ENCODE measurements at regions of chr17 and their contacts with region 1.

Region 1: DNA sequence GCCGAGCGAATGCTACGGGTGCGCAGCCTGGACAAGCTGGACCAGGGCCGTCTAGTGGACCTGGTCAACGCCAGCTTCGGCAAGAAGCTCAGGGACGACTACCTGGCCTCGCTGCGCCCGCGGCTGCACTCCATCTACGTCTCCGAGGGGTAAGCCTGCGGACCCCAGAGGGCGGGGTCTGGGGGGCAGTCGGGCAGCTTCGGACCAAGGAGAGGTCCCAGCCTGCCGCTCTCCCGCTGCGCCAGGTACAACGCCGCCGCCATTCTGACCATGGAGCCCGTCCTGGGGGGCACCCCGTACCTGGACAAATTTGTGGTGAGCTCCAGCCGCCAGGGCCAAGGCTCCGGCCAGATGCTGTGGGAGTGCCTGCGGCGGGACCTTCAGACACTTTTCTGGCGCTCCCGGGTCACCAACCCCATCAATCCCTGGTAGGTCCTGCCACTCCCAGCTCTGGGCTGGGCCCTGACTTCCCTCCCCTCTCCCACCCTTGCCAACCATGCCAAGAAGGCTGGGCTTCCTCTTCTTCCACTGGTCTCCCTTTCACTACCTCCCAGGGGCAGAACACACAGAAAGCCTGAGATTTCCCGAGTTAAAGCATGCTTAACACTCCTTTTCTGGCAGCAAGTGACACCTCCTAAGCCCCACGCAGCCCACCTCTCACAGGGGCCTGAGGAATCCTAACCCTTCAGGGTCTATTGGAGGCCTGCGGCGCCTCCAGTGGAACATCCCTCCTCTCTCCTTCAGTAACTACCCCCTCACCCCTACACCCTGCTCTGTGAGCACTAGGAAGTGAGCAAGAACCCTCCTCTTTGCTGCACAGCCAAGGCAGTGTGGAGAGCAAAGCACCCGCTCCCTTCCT is 3.2 kb downstream of the NAGS start:
- DNase-seq: peak; percentile 43
- H3K4me3 Mint-ChIP-seq: peak overlapping the region; percentile 79
- H3K27ac Mint-ChIP-seq: peak overlapping the region; percentile 78
- H3K4me1 Mint-ChIP-seq: peaks cover 40% of the 10 kb centered on the region
- H3K27me3 Mint-ChIP-seq: peaks cover 53% of the 10 kb centered on the region

Region 2: DNA sequence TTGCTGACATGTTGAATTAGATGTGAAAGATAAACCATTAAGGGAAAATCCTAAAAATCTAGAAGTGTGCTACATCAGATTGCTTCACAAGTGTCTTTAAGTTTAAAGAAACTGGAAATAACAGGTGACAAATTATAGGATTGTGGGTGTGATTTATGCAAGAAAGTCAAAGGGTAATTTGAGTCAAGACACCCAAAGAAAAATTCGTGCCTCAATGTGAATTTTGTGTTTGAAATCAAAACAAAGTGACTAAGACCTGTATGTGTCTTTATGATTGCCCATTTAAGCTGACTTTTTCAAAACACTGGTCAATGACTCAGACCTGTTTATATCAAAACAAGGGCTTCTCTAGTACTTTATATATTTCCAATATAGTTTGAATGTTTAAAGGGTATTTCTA is 48.6 kb before region 1 on chr17:
- CTCF ChIA-PET with region 1: no interaction called
- DNase-seq: no peak
- H3K4me3 Mint-ChIP-seq: no peak overlapping the region
- H3K27ac Mint-ChIP-seq: no peak overlapping the region
- H3K4me1 Mint-ChIP-seq: no peaks in the 10 kb centered on the region
- H3K27me3 Mint-ChIP-seq: peaks cover 50% of the 10 kb centered on the region

Region 3: GRCh38 chr17:43992641-43993040 is 14.9 kb before region 1 on chr17:
- CTCF ChIA-PET with region 1: no interaction called
- DNase-seq: no peak
- H3K4me3 Mint-ChIP-seq: no peak overlapping the region
- H3K27ac Mint-ChIP-seq: no peak overlapping the region
- H3K4me1 Mint-ChIP-seq: no peaks in the 10 kb centered on the region
- H3K27me3 Mint-ChIP-seq: peaks cover 24% of the 10 kb centered on the region

Region 4: GRCh38 chr17:44044067-44044466 is 36.5 kb after region 1 on chr17:
- CTCF ChIA-PET with region 1: interaction called, 13 read pairs
- DNase-seq: no peak
- H3K4me3 Mint-ChIP-seq: no peak overlapping the region
- H3K27ac Mint-ChIP-seq: peak overlapping the region; percentile 33
- H3K4me1 Mint-ChIP-seq: peaks cover 21% of the 10 kb centered on the region
- H3K27me3 Mint-ChIP-seq: no peaks in the 10 kb centered on the region

Region 5: DNA sequence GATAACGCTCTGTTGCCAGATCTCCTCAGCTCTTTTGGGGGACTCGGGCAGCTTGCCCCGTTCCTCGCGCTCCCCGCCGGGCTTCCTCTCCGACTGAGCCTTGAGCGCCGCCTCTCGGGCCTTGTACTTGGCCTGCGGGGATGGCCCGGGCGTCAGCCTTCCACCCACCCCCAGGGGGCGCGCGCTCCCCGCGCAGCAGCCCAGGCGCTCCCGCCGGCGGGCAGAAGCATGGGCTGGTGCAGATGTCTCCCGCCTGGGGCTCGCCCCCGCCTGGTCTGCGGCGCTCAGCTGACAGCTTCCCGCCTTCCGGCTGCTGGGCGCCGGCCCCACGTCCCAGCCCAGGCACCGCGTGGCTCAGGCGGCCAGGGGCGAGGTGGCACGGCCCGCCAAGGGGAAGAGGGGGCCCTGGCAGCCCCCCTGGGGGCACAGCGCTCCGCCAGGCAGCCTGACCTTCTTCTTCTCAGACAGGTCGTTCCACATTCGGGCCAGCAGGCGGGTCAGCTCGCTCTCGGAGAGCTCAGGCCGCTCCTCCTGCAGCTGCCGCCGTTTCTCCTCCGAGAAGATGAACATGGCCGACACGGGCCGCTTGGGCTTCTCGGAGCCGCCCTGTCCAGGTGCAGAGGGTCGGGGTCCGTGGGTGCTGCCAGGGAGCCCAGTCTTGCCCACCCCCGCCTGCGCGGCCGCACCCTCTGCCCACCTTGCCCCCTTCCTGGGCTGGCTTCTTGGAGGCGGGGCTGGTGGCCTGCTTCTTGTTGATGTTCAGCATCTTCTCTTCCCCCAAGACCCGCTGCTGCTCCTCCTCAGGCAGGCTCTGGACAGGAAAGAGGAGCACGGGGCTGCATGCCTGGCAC is 203.0 kb after region 1 on chr17:
- CTCF ChIA-PET with region 1: no interaction called
- DNase-seq: peak; percentile 93
- H3K4me3 Mint-ChIP-seq: peak overlapping the region; percentile 53
- H3K27ac Mint-ChIP-seq: peak overlapping the region; percentile 85
- H3K4me1 Mint-ChIP-seq: peaks cover 59% of the 10 kb centered on the region
- H3K27me3 Mint-ChIP-seq: no peaks in the 10 kb centered on the region